PC-3 (cell line): ENCODE measurements at regions of chr14 and their contacts with region 1.

Region 1: GRCh38 chr14:64841121-64841651 is 38.5 kb downstream of the SPTB start:
- DNase-seq: peak; percentile 88
- ATAC-seq: peak; percentile 95
- H3K4me3 ChIP-seq: no peak overlapping the region
- H3K27ac ChIP-seq: no peak overlapping the region
- H3K4me1 ChIP-seq: peaks cover 25% of the 10 kb centered on the region
- H3K27me3 ChIP-seq: peaks cover 31% of the 10 kb centered on the region
- CTCF ChIP-seq: peak; percentile 86

Region 2: GRCh38 chr14:64806202-64806860 is 34.9 kb before region 1 on chr14:
- CTCF ChIA-PET with region 1: interaction called, 3 read pairs
- POLR2A ChIA-PET with region 1: no interaction called
- intact Hi-C with region 1: loop called (anchors 1 kb)
- DNase-seq: peak; percentile 99
- ATAC-seq: peak; percentile 86
- H3K4me3 ChIP-seq: peak overlapping the region; percentile 52
- H3K27ac ChIP-seq: peak overlapping the region; percentile 93
- H3K4me1 ChIP-seq: peaks cover 36% of the 10 kb centered on the region
- H3K27me3 ChIP-seq: no peaks in the 10 kb centered on the region
- CTCF ChIP-seq: no peak

Region 3: GRCh38 chr14:64855721-64856528 is 14.7 kb after region 1 on chr14:
- CTCF ChIA-PET with region 1: interaction called, 13 read pairs
- POLR2A ChIA-PET with region 1: no interaction called
- intact Hi-C with region 1: loop called (anchors 1 kb)
- DNase-seq: no peak
- ATAC-seq: peak; percentile 61
- H3K4me3 ChIP-seq: no peak overlapping the region
- H3K27ac ChIP-seq: no peak overlapping the region
- H3K4me1 ChIP-seq: no peaks in the 10 kb centered on the region
- H3K27me3 ChIP-seq: no peaks in the 10 kb centered on the region
- CTCF ChIP-seq: no peak

Region 4: DNA sequence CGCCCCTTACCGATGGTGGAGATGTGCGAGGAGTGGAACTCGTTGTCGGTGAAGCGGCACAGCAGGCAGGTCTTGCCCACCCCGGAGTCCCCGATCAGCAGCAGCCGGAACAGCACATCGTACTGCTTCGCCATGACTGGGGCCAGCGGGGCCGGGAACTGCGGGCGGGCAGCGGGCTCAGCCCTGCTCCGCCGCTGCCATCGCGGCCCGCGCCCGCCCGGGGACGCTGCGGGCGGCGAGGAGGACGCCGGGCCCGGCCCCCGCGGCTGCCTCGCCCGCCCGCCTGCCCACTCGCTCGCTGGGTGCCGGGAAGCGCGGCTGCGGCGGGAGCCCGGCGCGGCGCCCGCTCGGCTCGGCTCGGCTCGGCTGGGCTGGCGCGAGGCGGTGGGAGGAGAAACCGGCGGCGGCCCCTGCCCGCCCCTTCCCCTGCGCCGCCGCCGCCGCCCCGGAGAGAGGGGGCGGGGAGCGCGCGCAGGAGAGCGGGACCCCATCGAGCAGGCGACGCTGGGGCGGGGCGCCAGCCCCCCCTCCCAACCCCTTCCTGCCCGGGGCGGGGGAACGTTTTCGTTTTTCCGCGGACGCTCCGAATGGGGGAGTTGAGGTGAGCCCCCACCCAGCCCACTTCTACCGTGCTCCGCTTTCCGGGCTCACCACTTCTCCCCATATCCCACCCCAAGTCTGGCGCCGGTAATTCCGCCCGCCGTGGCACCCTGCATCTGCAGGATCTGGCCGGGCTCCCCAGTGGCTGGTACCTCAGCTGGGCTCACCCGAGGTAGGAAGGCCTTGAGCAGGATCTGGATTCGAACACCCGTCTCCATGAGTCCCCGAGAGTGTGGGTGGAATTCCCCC is 131.0 kb after region 1 on chr14 and contains the start of gene RAB15:
- CTCF ChIA-PET with region 1: interaction called, 11 read pairs
- POLR2A ChIA-PET with region 1: no interaction called
- intact Hi-C with region 1: no loop called
- DNase-seq: peak; percentile 35
- ATAC-seq: peak; percentile 75
- H3K4me3 ChIP-seq: peak within 1 kb of the TSS; percentile 77
- H3K27ac ChIP-seq: no peak within 1 kb of the TSS
- H3K4me1 ChIP-seq: peaks cover 22% of the 10 kb centered on the region
- H3K27me3 ChIP-seq: no peaks in the 10 kb centered on the region
- CTCF ChIP-seq: no peak
- total RNA-seq, gene RAB15: 20.6 and 27.0 TPM in 2 replicates